ENCODE measurements at regions of chr5 and their contacts with region 1.

Region 1: GRCh38 chr5:153964880-153965645 is 73.6 kb downstream of the FAM114A2 start:
- DNase-seq: peak in 1 of 2 donors; percentile 37
- H3K4me3 ChIP-seq: peak overlapping the region in 1 of 2 donors; percentile 30
- H3K27ac ChIP-seq: no peak overlapping the region
- H3K4me1 ChIP-seq: peaks cover 0 to 19% (median 7%) of the 10 kb centered on the region in 4 donors
- H3K27me3 ChIP-seq: no peaks in the 10 kb centered on the region
- CTCF ChIP-seq: peak; percentile 88 to 94

Region 2: DNA sequence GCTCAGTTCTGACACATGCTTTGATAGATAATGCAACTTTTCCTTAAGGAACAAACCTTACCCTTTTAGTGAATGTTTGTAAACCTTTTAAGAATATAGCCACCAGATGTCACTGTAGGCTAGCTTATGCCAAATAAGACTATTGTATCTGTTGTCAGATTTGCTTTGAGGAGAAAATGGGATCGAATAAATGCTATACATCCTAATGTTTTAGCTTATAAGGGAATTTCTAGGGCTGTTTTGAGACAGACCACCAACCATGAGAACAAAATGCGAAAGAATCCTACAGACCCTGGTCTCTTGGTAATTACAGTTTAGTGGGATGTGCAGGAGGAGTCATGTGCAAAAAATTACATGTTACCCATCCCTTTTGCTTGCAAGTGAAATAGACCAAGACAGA is 1432.3 kb before region 1 on chr5:
- intact Hi-C with region 1: loop called (anchors 2 kb)
- DNase-seq: no peak
- H3K4me3 ChIP-seq: no peak overlapping the region
- H3K27ac ChIP-seq: no peak overlapping the region
- H3K4me1 ChIP-seq: no peaks in the 10 kb centered on the region
- H3K27me3 ChIP-seq: no peaks in the 10 kb centered on the region
- CTCF ChIP-seq: peak; percentile 50 to 75

Region 3: GRCh38 chr5:153147891-153148623 is 817.0 kb before region 1 on chr5:
- intact Hi-C with region 1: loop called (anchors 10 kb)
- DNase-seq: no peak
- H3K4me3 ChIP-seq: no peak overlapping the region
- H3K27ac ChIP-seq: no peak overlapping the region
- H3K4me1 ChIP-seq: no peaks in the 10 kb centered on the region
- H3K27me3 ChIP-seq: no peaks in the 10 kb centered on the region
- CTCF ChIP-seq: peak; percentile 57 to 58

Region 4: DNA sequence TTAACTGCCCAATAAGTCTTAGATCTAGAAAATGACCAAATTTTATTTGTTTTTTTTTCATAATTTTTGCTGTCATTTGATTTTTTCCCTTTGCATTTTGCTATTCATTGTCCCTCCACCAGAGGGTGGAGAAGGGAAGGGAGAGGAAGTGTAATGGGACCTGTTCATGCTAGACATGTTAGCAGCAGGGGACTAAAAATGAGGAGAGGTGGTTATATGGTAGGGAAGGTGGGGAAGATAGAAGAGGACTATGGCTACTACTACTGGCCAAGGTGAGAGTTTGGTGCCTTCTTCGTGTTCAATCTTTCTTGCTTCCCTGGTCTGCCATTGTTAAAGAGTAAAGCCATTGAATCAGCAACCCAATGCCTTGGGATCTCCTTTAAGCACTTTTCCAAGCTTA is 468.2 kb before region 1 on chr5:
- intact Hi-C with region 1: loop called (anchors 5 kb)
- DNase-seq: no peak
- H3K4me3 ChIP-seq: no peak overlapping the region
- H3K27ac ChIP-seq: no peak overlapping the region
- H3K4me1 ChIP-seq: peaks cover 0 to 10% (median 0%) of the 10 kb centered on the region in 4 donors
- H3K27me3 ChIP-seq: no peaks in the 10 kb centered on the region
- CTCF ChIP-seq: peak; percentile 66 to 76